BJ (cell line): ENCODE measurements at regions of chr7 and their contacts with region 1.

Region 1: DNA sequence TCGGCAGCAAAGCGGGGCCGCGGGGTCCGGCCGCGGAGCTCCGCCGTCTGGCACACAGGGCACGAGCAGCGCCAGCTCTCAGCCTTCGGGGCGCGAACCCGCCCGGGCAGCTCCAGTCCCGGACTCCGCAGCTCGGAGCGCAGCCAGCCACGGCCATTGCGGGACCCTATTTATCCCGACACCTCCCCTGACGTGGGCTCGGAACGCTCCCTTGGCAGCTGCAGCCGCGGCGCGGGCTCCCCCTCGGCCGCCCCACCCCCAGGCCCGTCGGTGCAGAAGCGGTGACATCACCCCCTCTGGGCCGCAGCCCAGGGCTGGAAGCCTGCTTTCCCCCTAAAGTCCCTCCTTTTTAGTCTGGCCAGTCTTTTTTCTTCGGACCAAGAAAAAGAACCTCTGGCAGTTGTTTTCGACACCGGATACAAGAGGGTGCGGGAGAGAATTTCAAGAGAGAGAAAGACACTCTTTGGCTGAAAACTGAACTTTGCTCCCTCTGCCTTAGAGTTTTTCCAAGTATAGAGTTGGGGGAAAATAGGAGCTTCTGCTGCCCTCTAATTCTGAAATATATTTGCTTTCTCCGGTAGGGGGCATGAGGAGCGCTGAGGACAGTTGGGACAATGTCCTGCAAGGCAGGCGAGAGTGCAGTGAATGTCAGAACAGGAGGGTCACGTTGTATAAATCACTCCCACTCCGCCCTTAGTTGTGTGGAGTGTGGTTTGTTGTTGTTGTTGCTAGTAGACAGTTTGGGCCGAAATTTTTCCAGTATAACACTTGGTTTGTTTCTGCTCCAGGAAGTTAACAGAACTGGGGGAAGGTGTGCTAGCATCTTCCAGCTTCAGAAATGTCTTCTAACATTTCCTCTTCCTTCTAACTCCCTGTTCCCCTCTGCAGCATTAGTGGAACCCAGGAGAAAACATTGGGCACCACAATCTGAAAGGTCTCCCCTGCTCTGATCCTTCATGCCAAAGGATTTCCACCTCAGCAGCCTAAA is at the start of gene SFRP4:
- DNase-seq: no peak
- H3K4me3 ChIP-seq: peak within 1 kb of the TSS; percentile 36
- H3K27me3 ChIP-seq: peaks cover 10% of the 10 kb centered on the region
- CTCF ChIP-seq: peak; percentile 70
- polyA plus RNA-seq, gene SFRP4: 0.16 and 0.22 TPM in 2 replicates

Region 2: DNA sequence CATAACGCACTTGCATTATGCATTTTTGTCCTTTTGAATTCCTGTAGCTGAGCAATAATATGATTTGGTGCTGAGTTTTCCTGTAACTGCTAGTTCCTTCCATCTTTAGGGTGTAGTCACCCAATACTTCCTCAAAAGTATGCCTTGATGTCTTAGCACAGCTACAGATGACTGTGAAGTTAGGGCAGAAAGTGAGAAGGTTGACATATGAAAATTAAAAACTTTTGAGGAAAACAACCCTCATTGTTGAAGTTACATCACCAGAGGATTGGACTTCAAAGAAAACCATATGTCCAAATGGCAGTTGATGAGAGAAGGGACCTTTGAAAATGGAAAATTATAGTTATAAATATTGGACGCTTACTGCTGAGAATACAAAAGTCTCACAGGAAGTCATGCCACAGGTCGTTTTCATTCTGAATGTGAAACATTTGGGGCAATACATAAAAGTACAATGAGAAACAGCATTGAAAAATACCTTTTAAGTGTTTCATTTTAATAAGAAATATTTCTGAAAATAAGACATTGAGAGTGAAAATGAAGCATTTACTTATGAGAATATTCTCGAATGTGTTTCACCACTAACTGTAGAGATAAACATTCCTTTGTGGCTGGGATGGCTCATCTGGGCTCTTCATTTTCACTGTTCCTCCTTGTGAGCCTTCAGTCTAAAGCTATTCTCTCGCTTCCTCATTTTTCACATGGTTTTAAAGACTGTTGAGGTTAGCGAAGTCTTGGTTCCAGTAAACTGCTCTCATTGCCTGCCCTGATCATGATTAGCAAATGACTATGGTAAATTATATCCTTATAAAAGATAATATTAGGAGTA is 130.0 kb before region 1 on chr7:
- CTCF ChIA-PET with region 1: no interaction called
- POLR2A ChIA-PET with region 1: no interaction called
- DNase-seq: no peak
- H3K4me3 ChIP-seq: no peak overlapping the region
- H3K27me3 ChIP-seq: no peaks in the 10 kb centered on the region
- CTCF ChIP-seq: no peak

Region 3: DNA sequence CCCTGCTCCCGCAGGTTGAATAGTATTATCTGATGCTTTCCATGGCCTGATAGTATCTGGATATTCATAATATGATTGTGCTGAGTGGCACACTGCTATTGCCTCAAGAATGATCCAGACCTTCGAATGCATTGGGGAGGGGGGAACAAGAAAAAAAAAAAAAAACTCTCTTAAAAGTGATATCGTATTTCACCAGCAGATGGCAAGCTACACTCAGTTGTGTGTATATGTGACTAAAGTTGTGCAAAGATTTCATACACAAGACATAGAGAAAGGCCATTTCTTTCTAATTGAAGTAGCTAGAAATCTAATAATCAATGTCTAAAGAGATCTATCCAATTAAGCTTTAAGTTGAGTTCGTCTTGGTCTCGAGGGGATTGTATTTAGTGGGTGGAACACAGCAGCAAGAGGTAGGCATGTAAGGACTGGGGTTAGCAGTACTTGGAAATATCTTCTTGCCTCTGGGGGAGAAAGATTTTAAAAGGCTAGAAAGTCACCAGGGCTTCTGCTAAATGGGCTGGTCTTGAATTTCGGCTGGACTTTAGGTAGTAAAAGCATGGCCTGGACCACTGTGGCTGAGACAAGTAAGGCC is 15.6 kb before region 1 on chr7:
- CTCF ChIA-PET with region 1: interaction called, 19 read pairs
- POLR2A ChIA-PET with region 1: no interaction called
- DNase-seq: no peak
- H3K4me3 ChIP-seq: no peak overlapping the region
- H3K27me3 ChIP-seq: no peaks in the 10 kb centered on the region
- CTCF ChIP-seq: peak; percentile 45